Heart right ventricle (tissue), 16 donors: ENCODE measurements at regions of chr20 and their contacts with region 1.

Region 1: GRCh38 chr20:62357187-62357667 is 9.9 kb downstream of the LAMA5 start:
- DNase-seq: peak; percentile 86 to 87
- ATAC-seq: peak; percentile 40 to 68 (median 52)
- H3K4me3 ChIP-seq: peak overlapping the region in 9 of 10 donors; percentile 4 to 44 (median 37)
- H3K27ac ChIP-seq: peak overlapping the region; percentile 77 to 98 (median 93)
- H3K4me1 ChIP-seq: peaks cover 68 to 95% (median 84%) of the 10 kb centered on the region in 9 donors
- H3K27me3 ChIP-seq: peaks cover 0 to 12% (median 0%) of the 10 kb centered on the region in 7 donors
- CTCF ChIP-seq: no peak

Region 2: GRCh38 chr20:62318400-62319345 is 38.6 kb before region 1 on chr20:
- intact Hi-C with region 1: loop called in 1 of 10 experiments (anchors 5 kb)
- DNase-seq: peak in 1 of 2 donors; percentile 12
- ATAC-seq: no peak
- H3K4me3 ChIP-seq: no peak overlapping the region
- H3K27ac ChIP-seq: no peak overlapping the region
- H3K4me1 ChIP-seq: no peaks in the 10 kb centered on the region
- H3K27me3 ChIP-seq: no peaks in the 10 kb centered on the region
- CTCF ChIP-seq: no peak

Region 3: GRCh38 chr20:62376112-62377063 is 19.2 kb after region 1 on chr20:
- intact Hi-C with region 1: loop called in 2 of 10 experiments (anchors 2 kb)
- DNase-seq: peak; percentile 52 to 62
- ATAC-seq: peak; percentile 40 to 84 (median 68)
- H3K4me3 ChIP-seq: no peak overlapping the region
- H3K27ac ChIP-seq: peak overlapping the region in 8 of 10 donors; percentile 40 to 84 (median 61)
- H3K4me1 ChIP-seq: peaks cover 6 to 69% (median 44%) of the 10 kb centered on the region in 9 donors
- H3K27me3 ChIP-seq: no peaks in the 10 kb centered on the region
- CTCF ChIP-seq: peak; percentile 10 to 63 (median 55)

Region 4: DNA sequence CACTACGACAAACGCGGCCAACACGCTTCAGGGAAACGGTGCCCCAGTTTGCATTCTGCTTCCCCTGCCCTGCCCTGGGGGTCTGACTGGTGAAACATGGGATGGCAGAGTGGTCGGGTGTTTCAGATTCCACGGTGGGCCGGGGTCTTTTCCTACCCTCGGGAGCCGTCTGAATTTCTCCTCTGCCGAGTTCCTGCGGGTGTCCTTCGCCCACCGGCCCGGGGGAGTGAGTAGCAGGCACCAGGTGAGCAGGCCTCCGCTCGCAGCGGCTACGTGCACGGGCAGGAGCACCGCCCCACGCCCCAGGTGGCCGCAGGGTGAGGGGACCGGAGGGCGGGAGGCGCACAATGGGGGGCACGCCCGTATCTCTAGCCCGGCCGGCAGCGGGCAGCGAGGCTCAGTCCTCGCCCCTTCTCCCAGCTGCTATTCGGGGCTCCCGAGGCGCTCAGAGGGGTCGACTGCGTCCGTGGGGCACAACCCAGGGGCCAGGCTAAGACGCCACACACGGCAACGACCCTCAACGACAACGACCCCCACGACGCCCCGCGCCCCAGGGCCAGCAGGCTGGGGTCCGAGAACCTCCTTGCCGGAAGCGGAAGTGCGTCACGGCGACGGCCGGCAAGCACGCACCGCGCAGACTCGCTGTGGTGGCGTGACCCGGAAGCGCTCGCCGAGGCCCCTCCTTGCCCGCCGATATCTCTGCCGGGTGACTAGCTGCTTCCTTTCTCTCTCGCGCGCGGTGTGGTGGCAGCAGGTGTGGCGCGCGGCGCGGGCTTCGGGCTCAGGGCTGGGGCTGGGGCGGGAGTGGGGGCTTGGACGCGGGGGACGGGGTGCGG is 29.4 kb after region 1 on chr20 and contains the start of gene RPS21:
- intact Hi-C with region 1: loop called in 2 of 10 experiments (anchors 2 kb)
- DNase-seq: peak; percentile 93 to 95
- ATAC-seq: peak; percentile 91 to 96 (median 95)
- H3K4me3 ChIP-seq: peak within 1 kb of the TSS; percentile 76 to 100 (median 92)
- H3K27ac ChIP-seq: peak within 1 kb of the TSS; percentile 79 to 99 (median 96)
- H3K4me1 ChIP-seq: peaks cover 9 to 47% (median 34%) of the 10 kb centered on the region in 9 donors
- H3K27me3 ChIP-seq: no peaks in the 10 kb centered on the region
- CTCF ChIP-seq: peak in 1 of 9 donors; percentile 12
- total RNA-seq, gene RPS21: 512 to 811 (median 576) TPM